HepG2 (cell line): ENCODE measurements at regions of chr15 and their contacts with region 1.

Region 1: DNA sequence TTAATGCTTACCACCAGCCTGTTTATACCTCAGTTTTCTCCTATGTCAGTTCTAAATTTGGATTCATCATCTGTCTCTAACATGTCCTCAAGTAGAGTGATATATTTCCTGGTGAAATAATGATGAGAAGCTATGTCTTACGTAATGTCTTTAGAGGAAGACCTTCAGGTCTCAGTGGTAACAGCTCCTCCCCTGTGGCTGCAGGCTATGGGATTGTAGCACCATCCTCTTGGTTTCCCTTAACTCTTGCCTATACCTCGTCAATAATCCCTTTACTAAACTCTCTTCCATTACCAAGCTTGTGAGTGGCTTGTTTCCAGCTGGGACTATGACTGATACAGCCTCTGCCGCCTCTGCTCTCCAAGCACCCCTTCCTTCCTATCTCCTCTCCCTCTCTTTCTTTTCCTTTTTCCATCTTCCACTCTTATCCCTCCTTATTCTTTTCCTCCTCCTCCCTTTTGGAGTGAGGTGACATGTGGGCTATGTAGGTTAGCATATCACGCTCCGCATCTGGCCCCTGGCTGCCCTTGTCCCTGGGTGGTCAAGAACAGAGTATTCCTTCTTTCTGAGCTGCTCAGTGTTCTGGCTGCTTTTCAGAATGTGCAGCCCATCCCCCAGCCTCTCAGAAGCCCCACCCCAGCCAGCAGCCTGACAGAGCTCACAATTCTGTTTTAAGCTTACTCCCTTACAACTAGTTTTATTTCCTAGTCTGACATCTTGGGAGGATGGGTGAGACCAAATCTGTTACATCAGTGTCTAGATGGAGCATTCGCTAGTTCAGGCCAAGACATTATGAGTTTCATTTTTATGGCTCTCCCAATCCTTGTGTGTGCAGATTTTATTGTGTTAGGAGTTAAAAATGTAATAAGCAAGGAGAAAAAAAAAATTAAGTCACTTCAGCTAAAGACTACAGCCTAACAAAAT is 75.0 kb upstream of the RNU6-1 start:
- DNase-seq: peak; percentile 65
- ATAC-seq: peak; percentile 73
- H3K4me3 ChIP-seq: peak overlapping the region; percentile 19 to 51 (median 35)
- H3K27ac ChIP-seq: peak overlapping the region; percentile 89
- H3K4me1 ChIP-seq: peaks cover 75% of the 10 kb centered on the region
- H3K27me3 ChIP-seq: no peaks in the 10 kb centered on the region
- CTCF ChIP-seq: no peak
- EP300 ChIP-seq: no peak
- POLR2A ChIP-seq: no peak; a peak in 1 of 4 replicates
- RAD21 ChIP-seq: no peak

Region 2: DNA sequence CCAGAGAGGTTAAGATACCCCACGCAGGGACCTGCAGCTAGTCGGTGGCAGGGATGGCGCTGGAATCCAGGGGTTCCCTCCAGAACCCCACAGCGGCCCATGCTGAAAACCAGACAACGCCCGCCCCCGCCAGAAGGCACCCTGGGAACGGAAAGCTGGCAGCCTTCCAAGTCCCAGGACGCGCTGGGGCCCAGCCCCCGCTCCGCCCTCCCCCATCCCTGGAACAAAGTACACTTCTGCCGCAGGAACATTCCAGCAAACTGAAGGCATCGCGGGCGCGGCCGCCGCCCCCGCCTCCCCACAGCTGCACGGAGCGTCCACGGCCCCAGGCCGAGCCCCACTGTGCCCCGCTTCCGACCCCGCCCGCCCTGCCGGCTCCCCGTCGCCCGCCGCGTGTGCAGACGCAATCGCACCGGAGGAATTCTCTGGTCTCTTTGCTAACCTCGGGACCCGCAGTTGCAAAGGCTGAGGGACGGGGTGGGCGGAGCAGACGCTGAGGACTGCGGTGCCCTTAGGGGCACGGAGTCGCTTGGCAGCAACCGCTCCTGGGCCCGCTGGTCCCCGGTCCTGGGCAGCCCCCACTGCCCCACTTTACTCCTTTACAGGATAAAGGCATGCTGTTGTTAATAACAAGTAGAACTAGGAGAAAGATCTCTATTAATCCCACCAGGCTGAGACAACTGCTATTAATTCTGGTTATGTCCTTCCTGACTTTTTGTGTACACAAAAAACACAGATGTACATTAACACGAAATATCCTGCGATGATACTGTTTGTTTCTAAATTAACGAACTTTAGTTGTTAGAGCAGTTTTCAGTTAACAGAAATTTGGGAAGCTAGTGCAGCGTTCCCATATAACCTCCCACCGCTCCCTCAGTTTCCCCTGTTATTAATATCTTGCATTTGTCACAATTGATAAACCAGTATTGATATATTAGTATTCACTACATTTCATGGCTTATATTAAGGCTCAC is 30.0 kb before region 1 on chr15:
- CTCF ChIA-PET with region 1: no interaction called
- POLR2A ChIA-PET with region 1: interaction called, 13 read pairs
- in situ Hi-C with region 1: no loop called
- intact Hi-C with region 1: loop called (anchors 1 kb)
- DNase-seq: peak; percentile 89
- ATAC-seq: peak; percentile 96
- H3K4me3 ChIP-seq: peak overlapping the region; percentile 43 to 60 (median 54); a peak in 5 of 6 replicates
- H3K27ac ChIP-seq: peak overlapping the region; percentile 81
- H3K4me1 ChIP-seq: peaks cover 60% of the 10 kb centered on the region
- H3K27me3 ChIP-seq: no peaks in the 10 kb centered on the region
- CTCF ChIP-seq: no peak
- EP300 ChIP-seq: peak; percentile 70 to 93; a peak in 3 of 4 replicates
- POLR2A ChIP-seq: peak; percentile 47 to 52; a peak in 3 of 4 replicates
- RAD21 ChIP-seq: no peak; the same call in 1 of the 2 replicates